ENCODE measurements at regions of chr5 and their contacts with region 1.

Region 1: DNA sequence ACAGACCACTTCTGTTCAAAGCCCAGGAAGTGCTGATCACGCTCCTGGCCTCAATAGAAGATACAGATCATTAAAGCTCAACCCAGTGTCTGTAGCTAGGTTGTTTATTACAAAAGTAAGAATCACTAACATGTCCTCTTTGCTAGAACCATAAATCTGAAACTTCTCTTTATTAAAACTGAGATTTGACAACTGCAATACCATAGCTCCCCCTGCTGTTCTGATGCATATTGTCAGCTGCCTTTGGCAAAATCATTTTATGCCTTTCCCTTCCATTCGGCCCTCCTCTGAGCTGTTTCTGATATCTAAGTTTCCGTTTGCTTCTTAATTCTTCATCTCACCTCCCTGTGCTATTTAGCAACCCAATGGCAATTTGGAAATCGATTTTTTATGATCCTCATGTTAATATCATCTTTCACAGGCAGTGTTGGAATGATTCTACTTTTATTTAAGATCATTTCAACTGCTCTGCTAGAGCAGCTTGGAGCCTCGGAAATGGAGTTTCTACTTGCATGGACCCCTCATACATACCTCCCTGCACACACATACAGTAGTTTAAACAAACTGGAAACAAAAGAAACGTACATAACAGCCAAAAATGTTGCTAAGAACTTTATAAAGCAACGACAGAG is 998.8 kb downstream of the MAT2B start:
- DNase-seq: no peak
- H3K4me3 ChIP-seq: no peak overlapping the region
- H3K27ac ChIP-seq: no peak overlapping the region
- H3K4me1 ChIP-seq: no peaks in the 10 kb centered on the region
- H3K27me3 ChIP-seq: no peaks in the 10 kb centered on the region
- CTCF ChIP-seq: peak; percentile 66 to 76 (median 70)
- EP300 ChIP-seq: no peak
- POLR2A ChIP-seq: no peak

Region 2: GRCh38 chr5:163564321-163564938 is 939.8 kb before region 1 on chr5:
- intact Hi-C with region 1: loop called (anchors 5 kb)
- DNase-seq: no peak
- H3K4me3 ChIP-seq: no peak overlapping the region
- H3K27ac ChIP-seq: no peak overlapping the region
- H3K4me1 ChIP-seq: peaks cover 15 to 21% (median 20%) of the 10 kb centered on the region in 4 donors
- H3K27me3 ChIP-seq: peaks cover 0 to 30% (median 6%) of the 10 kb centered on the region in 4 donors
- CTCF ChIP-seq: peak; percentile 83 to 90 (median 87)
- EP300 ChIP-seq: no peak
- POLR2A ChIP-seq: no peak

Region 3: GRCh38 chr5:164013077-164013670 is 491.1 kb before region 1 on chr5:
- intact Hi-C with region 1: loop called (anchors 2 kb)
- DNase-seq: no peak
- H3K4me3 ChIP-seq: no peak overlapping the region
- H3K27ac ChIP-seq: no peak overlapping the region
- H3K4me1 ChIP-seq: no peaks in the 10 kb centered on the region
- H3K27me3 ChIP-seq: no peaks in the 10 kb centered on the region
- CTCF ChIP-seq: peak; percentile 58 to 64 (median 60)
- EP300 ChIP-seq: no peak
- POLR2A ChIP-seq: no peak

Region 4: GRCh38 chr5:164132358-164132757 is 371.9 kb before region 1 on chr5:
- intact Hi-C with region 1: no loop called
- DNase-seq: no peak
- H3K4me3 ChIP-seq: no peak overlapping the region
- H3K27ac ChIP-seq: no peak overlapping the region
- H3K4me1 ChIP-seq: no peaks in the 10 kb centered on the region
- H3K27me3 ChIP-seq: no peaks in the 10 kb centered on the region
- CTCF ChIP-seq: no peak
- EP300 ChIP-seq: no peak
- POLR2A ChIP-seq: no peak

Region 5: GRCh38 chr5:164412531-164412930 is 91.7 kb before region 1 on chr5:
- intact Hi-C with region 1: no loop called
- DNase-seq: no peak
- H3K4me3 ChIP-seq: no peak overlapping the region
- H3K27ac ChIP-seq: no peak overlapping the region
- H3K4me1 ChIP-seq: no peaks in the 10 kb centered on the region
- H3K27me3 ChIP-seq: no peaks in the 10 kb centered on the region
- CTCF ChIP-seq: no peak
- EP300 ChIP-seq: no peak
- POLR2A ChIP-seq: no peak